Gastrocnemius medialis (tissue), 4 donors: ENCODE measurements at regions of chr18 and their contacts with region 1.

Region 1: GRCh38 chr18:24987303-24988252 is 364.4 kb downstream of the ZNF521 start:
- DNase-seq: peak; percentile 82 to 91
- ATAC-seq: peak; percentile 81 to 84
- H3K4me3 ChIP-seq: peak overlapping the region; percentile 45 to 59 (median 48)
- H3K27ac ChIP-seq: peak overlapping the region; percentile 82 to 88 (median 86)
- H3K4me1 ChIP-seq: peaks cover 61 to 62% of the 10 kb centered on the region in 2 donors
- H3K27me3 ChIP-seq: no peaks in the 10 kb centered on the region
- CTCF ChIP-seq: no peak
- POLR2A ChIP-seq: peak; percentile 25 to 47

Region 2: DNA sequence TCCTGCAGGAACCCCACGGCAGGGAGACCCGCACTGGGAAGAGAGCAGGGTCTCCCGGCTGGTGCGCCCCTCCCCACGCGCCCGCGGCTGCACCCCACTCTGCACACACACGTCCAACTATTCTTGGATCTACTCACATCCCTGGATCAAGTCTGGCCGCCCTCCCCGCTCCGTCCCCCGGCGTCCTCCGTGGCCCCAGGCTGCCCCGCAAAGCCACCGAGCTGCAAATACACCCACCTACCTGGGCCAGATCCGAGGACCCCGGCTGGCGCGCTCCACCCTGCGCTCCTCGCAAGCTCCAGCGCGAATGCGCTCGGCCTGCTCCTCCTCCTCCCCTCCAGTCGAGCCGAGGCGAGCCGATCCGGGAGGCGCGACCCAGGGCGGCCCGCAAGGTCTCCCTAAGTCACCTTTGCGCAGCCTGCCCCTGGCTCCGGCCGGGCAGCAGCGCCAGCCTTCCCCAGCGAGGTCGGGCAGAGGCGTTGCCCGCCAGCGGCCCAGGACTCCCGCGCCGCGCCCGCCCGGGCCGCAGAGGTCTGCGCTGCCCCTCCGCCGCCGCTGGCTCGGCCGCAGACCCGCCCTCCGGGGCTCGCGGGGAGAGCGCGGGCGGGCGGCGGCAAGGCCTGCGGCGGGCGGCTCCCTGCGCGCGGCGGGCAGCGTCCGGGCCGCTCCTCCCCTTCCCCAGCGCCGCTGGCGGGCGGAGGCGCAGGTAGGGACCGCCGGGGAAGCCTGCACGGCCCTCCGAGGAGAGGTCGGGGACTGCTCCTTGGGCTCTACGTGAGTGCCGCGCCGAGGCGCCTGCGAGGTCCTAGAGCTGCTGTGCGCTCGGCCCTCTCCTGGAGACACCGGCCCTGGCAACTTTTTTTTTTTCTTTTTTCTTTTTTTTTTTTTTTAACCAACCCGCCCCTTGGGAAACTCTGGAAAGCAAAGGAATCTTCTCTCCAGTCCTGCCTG is 715.9 kb before region 1 on chr18:
- in situ Hi-C with region 1: no loop called
- intact Hi-C with region 1: loop called (anchors 10 kb)
- DNase-seq: peak; percentile 64 to 77
- ATAC-seq: peak; percentile 76 to 81
- H3K4me3 ChIP-seq: peak overlapping the region; percentile 81 to 94 (median 86)
- H3K27ac ChIP-seq: peak overlapping the region; percentile 88 to 94 (median 91)
- H3K4me1 ChIP-seq: peaks cover 13 to 54% of the 10 kb centered on the region in 2 donors
- H3K27me3 ChIP-seq: no peaks in the 10 kb centered on the region
- CTCF ChIP-seq: peak in 2 of 5 experiments; percentile 41 to 49
- POLR2A ChIP-seq: peak; percentile 25 to 44

Region 3: GRCh38 chr18:25016666-25017065 is 29.1 kb after region 1 on chr18:
- in situ Hi-C with region 1: no loop called
- intact Hi-C with region 1: loop called (anchors 2 kb)
- DNase-seq: no peak
- ATAC-seq: no peak
- H3K4me3 ChIP-seq: no peak overlapping the region
- H3K27ac ChIP-seq: no peak overlapping the region
- H3K4me1 ChIP-seq: peaks cover 0 to 5% of the 10 kb centered on the region in 2 donors
- H3K27me3 ChIP-seq: no peaks in the 10 kb centered on the region
- CTCF ChIP-seq: no peak
- POLR2A ChIP-seq: no peak

Region 4: GRCh38 chr18:25298853-25299274 is 311.3 kb after region 1 on chr18:
- in situ Hi-C with region 1: no loop called
- intact Hi-C with region 1: loop called (anchors 5 kb)
- DNase-seq: peak; percentile 55 to 64
- ATAC-seq: peak; percentile 88 to 98
- H3K4me3 ChIP-seq: no peak overlapping the region
- H3K27ac ChIP-seq: peak overlapping the region; percentile 63 to 73 (median 70)
- H3K4me1 ChIP-seq: peaks cover 23 to 24% of the 10 kb centered on the region in 2 donors
- H3K27me3 ChIP-seq: no peaks in the 10 kb centered on the region
- CTCF ChIP-seq: no peak
- POLR2A ChIP-seq: no peak